Activated CD8-positive, alpha-beta memory T cell treated with anti-CD3 and anti-CD28 coated beads, Interleukin-2, amount 10 ng/mL, durations not matched to agents 7 days and 5 days (primary cell): ENCODE measurements at regions of chr11 and their contacts with region 1.

Region 1: GRCh38 chr11:66112601-66113098 is 42.6 kb downstream of the PACS1 start:
- DNase-seq: no peak
- ATAC-seq: no peak
- H3K4me3 Mint-ChIP-seq: no peak overlapping the region
- H3K27ac Mint-ChIP-seq: peak overlapping the region; percentile 87
- H3K4me1 Mint-ChIP-seq: peaks cover 90% of the 10 kb centered on the region
- H3K27me3 Mint-ChIP-seq: no peaks in the 10 kb centered on the region

Region 2: DNA sequence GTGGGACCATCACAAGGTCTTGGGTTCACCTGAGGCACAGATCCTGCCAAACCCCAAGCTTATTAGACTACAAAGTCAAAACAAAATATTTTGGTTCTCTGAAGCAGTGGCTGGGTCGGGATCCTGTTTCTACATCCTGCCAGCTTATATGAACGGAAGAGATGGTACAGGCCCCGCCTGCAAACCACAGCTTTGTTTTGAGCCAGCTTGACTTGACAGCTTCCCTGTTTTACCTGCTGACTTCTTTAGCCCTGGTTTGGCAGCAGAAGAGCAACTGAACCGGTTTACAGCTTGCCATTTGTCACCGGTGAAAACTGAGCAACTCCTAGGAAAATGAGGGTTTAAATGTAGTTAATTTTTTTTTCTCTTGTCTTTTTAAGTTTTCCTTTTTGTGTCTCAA is 31.1 kb before region 1 on chr11:
- CTCF ChIA-PET with region 1: interaction called, 14 read pairs
- DNase-seq: peak; percentile 89
- ATAC-seq: peak; percentile 95
- H3K4me3 Mint-ChIP-seq: peak overlapping the region; percentile 69
- H3K27ac Mint-ChIP-seq: peak overlapping the region; percentile 97
- H3K4me1 Mint-ChIP-seq: peaks cover 57% of the 10 kb centered on the region
- H3K27me3 Mint-ChIP-seq: no peaks in the 10 kb centered on the region

Region 3: GRCh38 chr11:66100272-66101065 is 12.2 kb before region 1 on chr11:
- CTCF ChIA-PET with region 1: interaction called, 11 read pairs
- DNase-seq: peak; percentile 85
- ATAC-seq: peak; percentile 96
- H3K4me3 Mint-ChIP-seq: peak overlapping the region; percentile 77
- H3K27ac Mint-ChIP-seq: peak overlapping the region; percentile 91
- H3K4me1 Mint-ChIP-seq: peaks cover 47% of the 10 kb centered on the region
- H3K27me3 Mint-ChIP-seq: no peaks in the 10 kb centered on the region

Region 4: GRCh38 chr11:66126808-66127555 is 14.3 kb after region 1 on chr11:
- CTCF ChIA-PET with region 1: interaction called, 18 read pairs
- DNase-seq: peak; percentile 75
- ATAC-seq: peak; percentile 87
- H3K4me3 Mint-ChIP-seq: peak overlapping the region; percentile 40
- H3K27ac Mint-ChIP-seq: peak overlapping the region; percentile 83
- H3K4me1 Mint-ChIP-seq: peaks cover 65% of the 10 kb centered on the region
- H3K27me3 Mint-ChIP-seq: no peaks in the 10 kb centered on the region

Region 5: DNA sequence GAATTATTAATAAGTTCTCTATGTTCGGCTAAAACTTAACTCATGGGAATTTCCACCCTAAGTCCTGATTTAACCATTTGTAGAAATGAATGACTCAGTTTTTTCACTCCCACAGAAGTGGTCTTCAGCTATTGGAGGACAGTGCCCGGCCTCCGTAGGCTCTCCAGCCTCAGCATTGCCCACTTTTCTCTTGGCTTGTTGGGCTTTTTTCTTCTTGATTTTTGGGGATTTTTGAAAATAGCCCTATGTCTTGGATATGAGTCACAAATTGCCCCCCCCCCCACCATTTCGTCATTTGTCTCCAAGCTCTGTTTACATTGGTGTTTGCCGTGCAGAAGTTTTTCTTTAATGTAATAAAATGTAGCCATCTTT is 24.1 kb after region 1 on chr11:
- CTCF ChIA-PET with region 1: interaction called, 14 read pairs
- DNase-seq: no peak
- ATAC-seq: no peak
- H3K4me3 Mint-ChIP-seq: no peak overlapping the region
- H3K27ac Mint-ChIP-seq: peak overlapping the region; percentile 43
- H3K4me1 Mint-ChIP-seq: peaks cover 37% of the 10 kb centered on the region
- H3K27me3 Mint-ChIP-seq: no peaks in the 10 kb centered on the region